ENCODE measurements at regions of chr16 and their contacts with region 1.

Region 1: GRCh38 chr16:57462209-57462977 is at the start of gene POLR2C:
- DNase-seq: peak; percentile 93
- ATAC-seq: peak; percentile 97
- H3K4me3 Mint-ChIP-seq: peak within 1 kb of the TSS; percentile 100
- H3K27ac Mint-ChIP-seq: peak within 1 kb of the TSS; percentile 99
- H3K4me1 Mint-ChIP-seq: peaks cover 29% of the 10 kb centered on the region
- H3K27me3 Mint-ChIP-seq: no peaks in the 10 kb centered on the region
- CTCF ChIP-seq: peak; percentile 38
- total RNA-seq, gene POLR2C: 52.2 and 56.6 TPM in 2 replicates

Region 2: GRCh38 chr16:57265850-57266530 is 196.4 kb before region 1 on chr16:
- CTCF ChIA-PET with region 1: no interaction called
- POLR2A ChIA-PET with region 1: no interaction called
- intact Hi-C with region 1: no loop called
- DNase-seq: no peak
- ATAC-seq: no peak
- H3K4me3 Mint-ChIP-seq: no peak overlapping the region
- H3K27ac Mint-ChIP-seq: no peak overlapping the region
- H3K4me1 Mint-ChIP-seq: no peaks in the 10 kb centered on the region
- H3K27me3 Mint-ChIP-seq: no peaks in the 10 kb centered on the region
- CTCF ChIP-seq: no peak

Region 3: DNA sequence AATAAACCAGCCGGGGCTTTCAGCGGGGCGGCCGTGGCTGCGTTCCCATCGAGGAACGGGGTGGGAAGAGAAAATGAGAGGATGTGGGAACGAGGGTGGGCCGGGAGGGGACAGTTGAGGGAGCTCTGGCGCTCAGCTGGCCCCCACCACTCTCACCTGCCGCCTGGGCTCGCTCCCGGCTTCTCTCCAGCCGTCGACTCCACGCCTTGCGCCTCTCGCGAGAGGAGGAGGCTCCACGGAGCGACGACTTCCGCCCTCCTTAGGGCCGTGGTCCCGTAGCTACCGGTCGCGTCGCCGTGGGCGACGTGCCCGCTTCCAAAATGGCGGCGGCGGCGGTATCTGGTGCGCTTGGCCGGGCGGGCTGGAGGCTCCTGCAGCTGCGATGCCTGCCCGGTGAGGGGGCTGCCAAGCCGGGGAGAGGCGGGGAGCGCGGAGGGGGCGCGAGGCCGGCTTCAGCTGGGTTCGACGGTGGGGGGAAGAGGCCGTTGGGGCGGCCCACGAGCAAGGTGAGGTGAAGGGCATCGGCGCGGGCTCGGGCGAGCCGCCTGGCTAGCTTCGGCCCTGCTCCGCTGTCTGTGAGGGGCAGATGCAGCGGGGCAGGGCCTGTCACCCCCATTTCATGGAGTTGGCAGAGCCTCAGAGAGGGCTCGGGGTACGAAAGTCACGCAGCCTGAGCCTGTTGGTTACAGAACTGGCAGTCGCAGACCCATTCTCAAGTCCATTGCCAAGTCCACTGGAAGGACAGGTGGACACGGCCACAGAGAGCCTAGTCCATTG is 15.0 kb before region 1 on chr16 and contains the starts of genes CIAPIN1 and COQ9:
- CTCF ChIA-PET with region 1: interaction called, 15 read pairs
- POLR2A ChIA-PET with region 1: interaction called, 36 read pairs
- intact Hi-C with region 1: loop called (anchors 1 kb)
- DNase-seq: peak; percentile 82
- ATAC-seq: peak; percentile 98
- H3K4me3 Mint-ChIP-seq: peak within 1 kb of the TSS; percentile 91
- H3K27ac Mint-ChIP-seq: peak within 1 kb of the TSS; percentile 84
- H3K4me1 Mint-ChIP-seq: peaks cover 19% of the 10 kb centered on the region
- H3K27me3 Mint-ChIP-seq: no peaks in the 10 kb centered on the region
- CTCF ChIP-seq: no peak
- total RNA-seq, gene CIAPIN1: 47.1 and 52.3 TPM in 2 replicates
- total RNA-seq, gene COQ9: 30.4 and 34.1 TPM in 2 replicates

Region 4: DNA sequence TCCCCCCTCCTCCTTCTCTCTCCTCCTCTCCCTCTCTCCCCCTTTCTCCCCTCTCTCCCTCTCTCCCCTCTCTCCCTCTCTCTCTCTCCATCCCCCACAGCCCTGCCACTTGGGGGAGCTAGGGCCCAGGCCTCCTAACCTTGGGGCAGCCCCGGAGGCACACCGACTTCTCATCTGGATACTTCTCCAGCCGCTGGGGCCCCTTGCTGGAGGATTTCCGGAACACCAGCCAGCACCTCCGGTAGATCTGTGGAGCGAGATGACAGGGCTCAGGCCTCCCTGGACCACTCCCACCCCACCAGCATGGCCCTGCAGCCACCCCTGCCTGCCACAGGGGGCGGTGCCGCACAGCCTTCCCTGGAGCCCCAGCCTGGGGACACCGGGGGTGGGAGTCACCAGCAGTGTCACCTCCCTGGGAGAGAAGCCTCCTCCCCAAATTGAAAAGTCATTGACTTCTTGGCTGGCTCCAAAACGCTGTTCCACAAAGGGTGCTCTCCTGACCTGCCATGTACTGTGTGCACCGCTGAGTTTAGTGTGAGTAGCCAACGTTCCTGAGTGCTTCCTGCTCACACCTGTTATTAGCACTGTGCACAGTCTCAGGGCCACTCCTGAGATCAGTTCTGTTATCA is 13.4 kb after region 1 on chr16:
- CTCF ChIA-PET with region 1: interaction called, 5 read pairs
- POLR2A ChIA-PET with region 1: interaction called, 7 read pairs
- intact Hi-C with region 1: loop called (anchors 2 kb)
- DNase-seq: peak; percentile 69
- ATAC-seq: peak; percentile 92
- H3K4me3 Mint-ChIP-seq: no peak overlapping the region
- H3K27ac Mint-ChIP-seq: no peak overlapping the region
- H3K4me1 Mint-ChIP-seq: peaks cover 40% of the 10 kb centered on the region
- H3K27me3 Mint-ChIP-seq: peaks cover 7% of the 10 kb centered on the region
- CTCF ChIP-seq: peak; percentile 51

Region 5: DNA sequence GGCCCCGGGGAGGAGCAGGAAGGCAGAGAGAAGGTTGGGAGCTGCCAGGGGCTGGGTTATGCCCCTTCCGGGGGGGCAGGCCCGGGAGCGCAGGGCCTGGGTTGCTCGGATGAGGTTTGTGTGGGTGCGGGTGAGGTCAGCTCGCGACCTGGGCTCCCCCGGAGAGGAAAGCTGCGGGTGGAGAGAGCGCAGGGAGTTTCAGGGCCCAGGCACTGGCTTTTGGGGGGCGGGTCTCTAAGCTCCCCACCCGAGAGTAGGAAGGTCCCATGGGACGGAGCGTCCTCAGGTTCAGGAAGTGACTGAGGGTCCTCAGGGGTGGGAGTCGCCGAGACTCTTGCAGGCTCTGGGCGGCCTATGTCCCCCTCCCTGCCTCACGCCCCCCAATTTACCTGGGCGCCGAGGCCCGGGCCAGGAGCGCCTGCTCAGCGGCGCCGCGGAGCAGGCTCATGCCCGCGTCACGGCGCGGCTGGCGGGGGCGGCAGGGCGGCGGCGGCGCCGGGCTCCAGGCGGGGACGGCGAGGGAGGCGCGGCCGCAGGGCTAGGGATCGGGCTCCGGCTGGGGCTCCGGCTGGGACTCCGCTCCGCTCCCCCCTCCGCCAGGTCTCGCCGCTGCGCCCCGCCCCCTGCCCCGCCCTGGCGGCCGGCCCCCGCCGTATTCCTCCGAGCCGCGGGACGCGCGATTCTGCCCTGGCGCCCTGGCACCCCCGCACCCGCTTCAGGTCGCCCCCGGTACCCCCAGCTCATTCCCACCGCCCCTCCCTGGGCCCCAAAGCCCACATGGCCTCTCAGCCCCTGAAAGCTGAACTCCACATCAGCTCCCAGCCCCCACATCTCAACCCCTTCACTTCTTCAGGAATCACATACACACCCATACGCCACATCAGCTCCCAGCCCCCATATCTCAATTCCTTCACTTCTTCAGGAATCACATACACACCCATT is 23.8 kb after region 1 on chr16 and contains the start of gene DOK4:
- CTCF ChIA-PET with region 1: no interaction called
- POLR2A ChIA-PET with region 1: interaction called, 10 read pairs
- intact Hi-C with region 1: no loop called
- DNase-seq: peak; percentile 78
- ATAC-seq: peak; percentile 96
- H3K4me3 Mint-ChIP-seq: peak within 1 kb of the TSS; percentile 82
- H3K27ac Mint-ChIP-seq: no peak within 1 kb of the TSS
- H3K4me1 Mint-ChIP-seq: peaks cover 16% of the 10 kb centered on the region
- H3K27me3 Mint-ChIP-seq: peaks cover 4% of the 10 kb centered on the region
- CTCF ChIP-seq: no peak
- total RNA-seq, gene DOK4: 0.66 and 0.73 TPM in 2 replicates

Region 6: DNA sequence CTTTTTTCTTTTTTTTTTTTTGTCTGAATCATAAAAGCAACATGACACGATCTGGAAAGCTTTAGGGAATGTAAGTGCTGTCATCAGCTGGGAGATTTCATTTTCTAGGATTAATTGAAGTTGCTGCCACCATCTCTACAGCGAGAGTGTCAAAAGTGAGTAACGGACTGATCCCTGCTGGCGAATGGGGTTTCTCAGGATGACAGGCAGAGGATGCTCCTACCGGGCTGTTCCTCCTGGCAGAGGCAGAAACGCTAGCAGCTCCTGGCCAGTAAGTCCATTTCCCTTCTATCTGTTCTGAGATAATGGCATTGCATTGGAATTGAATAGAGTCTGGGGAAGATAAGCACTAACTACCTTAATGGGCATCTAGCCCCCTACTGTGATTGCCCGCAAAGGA is 420.4 kb after region 1 on chr16:
- CTCF ChIA-PET with region 1: no interaction called
- POLR2A ChIA-PET with region 1: no interaction called
- intact Hi-C with region 1: no loop called
- DNase-seq: no peak
- ATAC-seq: no peak
- H3K4me3 Mint-ChIP-seq: no peak overlapping the region
- H3K27ac Mint-ChIP-seq: no peak overlapping the region
- H3K4me1 Mint-ChIP-seq: no peaks in the 10 kb centered on the region
- H3K27me3 Mint-ChIP-seq: peaks cover 33% of the 10 kb centered on the region
- CTCF ChIP-seq: no peak